ENCODE measurements at regions of chr2 and their contacts with region 1.

Region 1: DNA sequence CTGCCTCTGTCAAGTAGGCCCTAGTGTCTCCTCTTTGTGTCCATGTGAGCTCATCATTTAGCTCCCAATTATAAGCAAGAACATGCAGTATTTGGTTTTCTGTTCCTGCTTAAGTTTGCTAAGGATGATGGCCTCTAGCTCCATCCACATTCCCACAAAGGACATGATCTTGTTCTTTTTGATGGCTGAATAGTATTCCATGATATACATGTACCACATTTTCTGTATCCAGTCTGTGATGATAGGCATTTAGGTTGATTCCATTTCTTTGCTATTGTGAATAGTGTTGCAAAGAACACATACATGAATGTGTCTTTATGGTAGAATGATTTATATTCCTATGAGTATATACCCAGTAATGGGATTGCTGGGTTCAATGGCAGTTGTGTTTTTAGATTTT is 263.2 kb downstream of the PARD3B start:
- DNase-seq: no peak
- H3K4me3 ChIP-seq: no peak overlapping the region
- H3K27ac ChIP-seq: no peak overlapping the region
- H3K4me1 ChIP-seq: no peaks in the 10 kb centered on the region
- H3K27me3 ChIP-seq: no peaks in the 10 kb centered on the region
- CTCF ChIP-seq: no peak

Region 2: DNA sequence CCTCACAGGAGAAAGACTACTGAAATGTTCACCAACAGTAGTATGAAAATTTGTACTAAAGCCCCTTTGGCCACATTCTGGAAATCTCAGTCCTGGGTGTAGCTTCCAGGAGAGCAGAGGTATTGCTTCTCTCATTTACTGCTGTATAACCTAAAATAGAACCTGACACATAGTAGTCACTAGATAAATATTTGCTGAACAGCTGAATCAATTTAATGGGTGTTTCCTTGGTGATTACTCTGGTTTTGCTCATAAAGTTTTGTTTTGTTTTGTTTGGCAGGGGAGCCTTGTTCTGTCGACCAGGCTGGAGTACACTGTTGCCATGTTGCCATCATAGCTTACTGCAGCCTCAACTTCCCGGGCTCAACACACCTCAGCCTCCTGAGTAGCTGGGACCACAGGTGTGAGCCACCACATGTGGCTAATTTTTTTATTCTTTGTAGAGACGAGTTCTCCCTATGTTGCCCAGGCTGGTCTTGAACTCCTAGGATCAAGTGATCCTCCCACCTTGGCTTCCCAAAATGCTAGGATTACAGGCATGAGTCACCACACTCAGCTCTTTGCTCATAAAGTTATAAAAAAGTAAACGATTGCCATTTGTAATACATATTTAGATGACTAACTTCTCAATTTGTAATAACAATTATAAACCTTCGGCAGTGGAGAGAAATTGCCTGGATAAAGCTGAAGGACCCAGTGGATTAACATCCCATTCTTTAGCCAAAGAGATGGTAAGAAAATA is 274.7 kb before region 1 on chr2:
- CTCF ChIA-PET with region 1: no interaction called
- POLR2A ChIA-PET with region 1: interaction called, 23 read pairs
- intact Hi-C with region 1: no loop called
- DNase-seq: peak in 1 of 2 experiments; percentile 87
- H3K4me3 ChIP-seq: no peak overlapping the region
- H3K27ac ChIP-seq: 0 out of 2 replicates have a peak overlapping the region, but pooled peaks have one; percentile 1
- H3K4me1 ChIP-seq: peaks cover 33% of the 10 kb centered on the region
- H3K27me3 ChIP-seq: no peaks in the 10 kb centered on the region
- CTCF ChIP-seq: no peak

Region 3: GRCh38 chr2:204715361-204715760 is 93.1 kb before region 1 on chr2:
- CTCF ChIA-PET with region 1: no interaction called
- POLR2A ChIA-PET with region 1: no interaction called
- intact Hi-C with region 1: no loop called
- DNase-seq: no peak
- H3K4me3 ChIP-seq: no peak overlapping the region
- H3K27ac ChIP-seq: no peak overlapping the region
- H3K4me1 ChIP-seq: no peaks in the 10 kb centered on the region
- H3K27me3 ChIP-seq: no peaks in the 10 kb centered on the region
- CTCF ChIP-seq: no peak

Region 4: GRCh38 chr2:205461678-205462665 is 653.5 kb after region 1 on chr2:
- CTCF ChIA-PET with region 1: no interaction called
- POLR2A ChIA-PET with region 1: no interaction called
- intact Hi-C with region 1: no loop called
- DNase-seq: no peak
- H3K4me3 ChIP-seq: no peak overlapping the region
- H3K27ac ChIP-seq: no peak overlapping the region
- H3K4me1 ChIP-seq: no peaks in the 10 kb centered on the region
- H3K27me3 ChIP-seq: no peaks in the 10 kb centered on the region
- CTCF ChIP-seq: no peak

Measured in PC-9 (cell line).